ENCODE measurements at regions of chr9 and their contacts with region 1.

Region 1: GRCh38 chr9:72383978-72384709 is 19.1 kb upstream of the ZFAND5 start:
- DNase-seq: no peak
- H3K4me3 Mint-ChIP-seq: no peak overlapping the region
- H3K27ac Mint-ChIP-seq: no peak overlapping the region
- H3K4me1 Mint-ChIP-seq: peaks cover 9% of the 10 kb centered on the region
- H3K27me3 Mint-ChIP-seq: peaks cover 4% of the 10 kb centered on the region

Region 2: DNA sequence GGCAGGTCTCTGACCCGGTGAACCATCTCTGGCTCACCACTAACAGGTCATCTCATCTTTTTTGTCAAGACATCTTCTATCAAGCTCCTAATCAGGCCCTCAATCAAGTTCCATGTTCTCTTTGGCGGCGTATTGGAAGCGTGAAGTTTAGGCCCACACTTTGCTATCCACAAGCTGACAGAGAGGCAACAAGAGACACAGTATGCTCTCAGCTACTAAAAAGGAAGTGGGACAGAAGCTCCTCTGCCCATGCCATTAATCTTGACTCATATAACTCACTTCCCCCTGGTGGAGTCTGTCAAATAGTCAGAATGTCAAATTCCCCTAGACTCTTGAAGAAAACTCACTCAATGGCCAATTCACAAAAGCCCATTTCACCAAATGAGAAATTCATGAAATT is 59.7 kb after region 1 on chr9:
- intact Hi-C with region 1: loop called (anchors 1 kb)
- DNase-seq: peak; percentile 8
- H3K4me3 Mint-ChIP-seq: peak overlapping the region; percentile 20
- H3K27ac Mint-ChIP-seq: peak overlapping the region; percentile 85
- H3K4me1 Mint-ChIP-seq: peaks cover 43% of the 10 kb centered on the region
- H3K27me3 Mint-ChIP-seq: no peaks in the 10 kb centered on the region